Naive thymus-derived CD4-positive, alpha-beta T cell (primary cell): ENCODE measurements at regions of chr2 and their contacts with region 1.

Region 1: DNA sequence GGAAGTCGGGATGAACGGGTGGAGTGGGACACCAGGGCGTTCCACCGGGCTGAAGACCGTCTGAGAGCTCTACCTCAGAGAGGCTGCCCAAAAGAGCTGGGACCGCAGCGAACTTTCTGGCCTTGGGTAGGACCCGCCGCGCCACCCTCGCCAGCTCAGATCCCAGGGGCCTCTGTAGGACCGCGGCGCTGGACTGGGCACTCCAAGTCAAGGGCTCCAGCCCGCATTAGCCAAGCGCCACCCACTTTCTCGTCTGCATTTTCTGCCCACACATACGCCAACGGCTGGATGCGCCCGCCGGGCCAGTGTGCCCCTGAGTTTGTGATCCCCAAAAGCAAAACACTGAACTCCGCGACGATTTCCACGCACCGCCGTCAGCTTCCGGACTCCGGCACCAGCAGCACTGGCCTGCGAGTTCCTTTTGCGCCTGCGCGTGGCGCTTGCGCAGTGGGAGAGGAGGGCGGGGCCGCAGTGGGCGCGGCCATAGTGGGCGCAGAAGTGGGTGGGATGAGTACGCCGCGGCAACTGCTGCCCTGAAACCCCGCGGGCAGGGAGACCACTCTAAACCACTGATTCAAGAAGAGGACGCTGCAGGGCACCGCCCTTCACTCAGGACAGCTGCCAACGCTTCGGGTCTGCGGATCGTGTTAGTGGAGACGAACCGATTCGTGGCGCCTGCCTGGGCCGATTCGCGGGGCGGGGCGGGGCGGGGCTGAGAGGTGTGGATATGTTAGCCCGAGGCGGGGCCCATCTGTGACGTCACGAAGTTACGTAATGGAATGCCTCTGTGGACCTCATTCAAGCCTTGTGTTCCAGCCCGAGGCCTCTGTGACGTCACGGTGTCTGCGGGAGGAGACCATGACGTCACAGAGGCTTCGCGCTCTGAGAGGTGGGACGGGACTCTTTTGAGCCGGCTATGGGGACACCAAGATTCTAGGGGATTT is 10.5 kb downstream of the OSR1 start:
- DNase-seq: peak; percentile 97 to 100 (median 99)
- ATAC-seq: peak; percentile 94
- H3K4me3 ChIP-seq: peak overlapping the region; percentile 85
- H3K4me3 Mint-ChIP-seq: peak overlapping the region; percentile 90 to 99 (median 96)
- H3K27ac ChIP-seq: peak overlapping the region; percentile 90
- H3K27ac Mint-ChIP-seq: peak overlapping the region; percentile 92 to 100 (median 98)
- H3K4me1 ChIP-seq: peaks cover 11 to 22% of the 10 kb centered on the region in 2 donors
- H3K4me1 Mint-ChIP-seq: peaks cover 19 to 45% (median 34%) of the 10 kb centered on the region in 7 donors
- H3K27me3 ChIP-seq: peaks cover 7 to 25% of the 10 kb centered on the region in 2 donors
- H3K27me3 Mint-ChIP-seq: peaks cover 29 to 41% (median 33%) of the 10 kb centered on the region in 5 donors

Region 2: GRCh38 chr2:17753803-17754663 is 1593.9 kb before region 1 on chr2 and contains the starts of genes GEN1 and SMC6:
- CTCF ChIA-PET with region 1: no interaction called
- POLR2A ChIA-PET with region 1: no interaction called
- intact Hi-C with region 1: loop called (anchors 2 to 5 kb)
- DNase-seq: peak; percentile 84 to 98 (median 94)
- ATAC-seq: peak; percentile 91
- H3K4me3 ChIP-seq: peak within 1 kb of the TSS; percentile 89
- H3K4me3 Mint-ChIP-seq: peak within 1 kb of the TSS; percentile 82 to 94 (median 90)
- H3K27ac ChIP-seq: peak within 1 kb of the TSS; percentile 99
- H3K27ac Mint-ChIP-seq: peak within 1 kb of the TSS; percentile 84 to 98 (median 96)
- H3K4me1 ChIP-seq: peaks cover 0 to 10% of the 10 kb centered on the region in 2 donors
- H3K4me1 Mint-ChIP-seq: peaks cover 13 to 48% (median 29%) of the 10 kb centered on the region in 7 donors
- H3K27me3 ChIP-seq: no peaks in the 10 kb centered on the region
- H3K27me3 Mint-ChIP-seq: no peaks in the 10 kb centered on the region
- total RNA-seq, gene GEN1: 5.6 to 25.8 (median 8.0) TPM
- total RNA-seq, gene SMC6: 7.9 to 35.6 (median 14.6) TPM

Region 3: GRCh38 chr2:19266838-19267237 is 81.1 kb before region 1 on chr2:
- CTCF ChIA-PET with region 1: no interaction called
- POLR2A ChIA-PET with region 1: no interaction called
- intact Hi-C with region 1: no loop called
- DNase-seq: no peak
- ATAC-seq: no peak
- H3K4me3 ChIP-seq: no peak overlapping the region
- H3K4me3 Mint-ChIP-seq: no peak overlapping the region
- H3K27ac ChIP-seq: no peak overlapping the region
- H3K27ac Mint-ChIP-seq: no peak overlapping the region
- H3K4me1 ChIP-seq: no peaks in the 10 kb centered on the region
- H3K4me1 Mint-ChIP-seq: no peaks in the 10 kb centered on the region
- H3K27me3 ChIP-seq: no peaks in the 10 kb centered on the region
- H3K27me3 Mint-ChIP-seq: peaks cover 0 to 7% (median 0%) of the 10 kb centered on the region in 5 donors

Region 4: DNA sequence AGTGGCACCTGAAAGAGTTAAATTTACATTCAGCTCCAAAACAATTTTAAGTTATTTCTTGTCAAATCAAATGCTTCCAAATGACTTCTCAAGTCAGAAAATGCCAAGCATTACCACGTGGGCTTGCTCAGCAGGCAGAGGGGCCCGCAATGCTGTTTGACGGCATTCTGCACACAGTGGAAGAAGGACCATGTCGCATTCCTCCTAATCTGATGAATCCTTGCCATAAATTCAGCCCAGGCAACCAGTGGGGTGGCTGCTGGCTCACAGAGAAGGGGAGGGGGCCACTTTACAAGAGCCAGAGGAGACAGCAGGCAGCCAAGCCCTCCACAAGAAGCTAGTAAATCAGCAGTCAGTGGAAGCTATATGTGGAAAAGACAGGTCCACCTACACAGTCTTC is 46.2 kb before region 1 on chr2:
- CTCF ChIA-PET with region 1: no interaction called
- POLR2A ChIA-PET with region 1: no interaction called
- intact Hi-C with region 1: no loop called
- DNase-seq: no peak
- ATAC-seq: no peak
- H3K4me3 ChIP-seq: no peak overlapping the region
- H3K4me3 Mint-ChIP-seq: no peak overlapping the region
- H3K27ac ChIP-seq: no peak overlapping the region
- H3K27ac Mint-ChIP-seq: no peak overlapping the region
- H3K4me1 ChIP-seq: no peaks in the 10 kb centered on the region
- H3K4me1 Mint-ChIP-seq: no peaks in the 10 kb centered on the region
- H3K27me3 ChIP-seq: no peaks in the 10 kb centered on the region
- H3K27me3 Mint-ChIP-seq: no peaks in the 10 kb centered on the region

Region 5: GRCh38 chr2:19474128-19474527 is 126.2 kb after region 1 on chr2:
- CTCF ChIA-PET with region 1: no interaction called
- POLR2A ChIA-PET with region 1: no interaction called
- intact Hi-C with region 1: loop called (anchors 1 to 5 kb)
- DNase-seq: peak in 8 of 9 donors; percentile 30 to 84 (median 75)
- ATAC-seq: peak; percentile 95
- H3K4me3 ChIP-seq: no peak overlapping the region
- H3K4me3 Mint-ChIP-seq: peak overlapping the region; percentile 24 to 75 (median 56)
- H3K27ac ChIP-seq: no peak overlapping the region
- H3K27ac Mint-ChIP-seq: peak overlapping the region in 7 of 9 donors; percentile 14 to 84 (median 22)
- H3K4me1 ChIP-seq: peaks cover 8 to 19% of the 10 kb centered on the region in 2 donors
- H3K4me1 Mint-ChIP-seq: peaks cover 11 to 32% (median 25%) of the 10 kb centered on the region in 7 donors
- H3K27me3 ChIP-seq: no peaks in the 10 kb centered on the region
- H3K27me3 Mint-ChIP-seq: peaks cover 33 to 66% (median 43%) of the 10 kb centered on the region in 5 donors

Region 6: DNA sequence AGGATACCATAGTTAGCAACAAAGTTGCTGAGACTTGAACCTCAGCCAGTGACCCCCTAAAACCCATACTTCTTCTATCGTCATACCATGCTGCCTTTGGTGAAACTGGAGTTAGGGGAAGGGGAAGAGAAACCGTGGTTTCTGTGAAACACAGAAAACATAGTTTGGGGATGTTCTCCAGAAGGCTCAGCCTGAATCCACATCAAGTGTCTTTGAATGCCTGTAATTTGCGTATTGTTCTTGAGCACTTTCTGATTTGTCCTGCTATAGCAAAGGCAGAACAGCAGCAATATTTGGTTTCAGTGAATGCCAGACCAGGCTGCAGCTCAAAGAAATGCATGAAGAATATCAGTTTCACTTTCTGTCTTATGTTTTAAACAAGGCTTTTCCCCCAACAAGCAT is 295.2 kb after region 1 on chr2:
- CTCF ChIA-PET with region 1: no interaction called
- POLR2A ChIA-PET with region 1: no interaction called
- intact Hi-C with region 1: no loop called
- DNase-seq: no peak
- ATAC-seq: no peak
- H3K4me3 ChIP-seq: no peak overlapping the region
- H3K4me3 Mint-ChIP-seq: no peak overlapping the region
- H3K27ac ChIP-seq: no peak overlapping the region
- H3K27ac Mint-ChIP-seq: no peak overlapping the region
- H3K4me1 ChIP-seq: no peaks in the 10 kb centered on the region
- H3K4me1 Mint-ChIP-seq: peaks cover 0 to 3% (median 0%) of the 10 kb centered on the region in 7 donors
- H3K27me3 ChIP-seq: no peaks in the 10 kb centered on the region
- H3K27me3 Mint-ChIP-seq: peaks cover 3 to 19% (median 9%) of the 10 kb centered on the region in 5 donors

Region 7: DNA sequence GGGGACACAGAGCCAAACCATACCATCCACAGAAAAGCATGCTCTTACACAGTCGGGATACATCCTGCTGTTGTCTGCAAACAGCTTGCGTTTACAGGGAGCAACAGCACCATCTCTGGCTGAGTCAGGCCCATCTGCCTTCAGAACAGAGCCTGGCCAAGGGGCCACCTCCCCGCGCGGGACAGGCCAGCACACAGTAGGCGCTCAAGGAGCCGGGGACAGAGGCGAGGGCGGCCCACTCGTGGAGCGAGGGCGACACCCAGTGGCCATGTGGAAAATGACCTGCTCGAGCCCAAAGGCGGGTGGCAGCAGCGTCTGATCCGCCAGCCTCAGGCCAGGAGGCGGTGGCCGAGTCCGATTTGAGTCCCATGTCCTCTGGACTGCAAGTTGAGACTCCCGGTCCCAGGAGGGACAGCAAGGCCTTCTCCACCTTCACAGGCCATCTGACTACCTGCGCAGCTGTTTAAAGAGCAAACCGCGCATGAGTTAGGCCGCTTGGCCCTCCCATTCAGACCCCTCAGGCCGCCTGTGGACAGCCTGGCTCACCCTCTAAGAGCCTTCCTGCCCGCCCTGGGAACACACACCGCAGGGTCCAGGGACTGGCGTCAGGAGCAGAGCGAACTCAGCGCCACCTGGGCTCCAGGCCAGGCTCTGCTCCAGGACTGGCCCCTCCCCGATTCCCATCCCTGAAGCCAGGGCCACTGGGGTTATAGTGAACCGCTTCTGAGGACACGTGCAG is 515.6 kb after region 1 on chr2:
- CTCF ChIA-PET with region 1: no interaction called
- POLR2A ChIA-PET with region 1: interaction called, 6 read pairs
- intact Hi-C with region 1: loop called (anchors 1 to 2 kb)
- DNase-seq: peak; percentile 28 to 77 (median 66)
- ATAC-seq: peak; percentile 84
- H3K4me3 ChIP-seq: no peak overlapping the region
- H3K4me3 Mint-ChIP-seq: peak overlapping the region in 1 of 10 donors; percentile 34
- H3K27ac ChIP-seq: no peak overlapping the region
- H3K27ac Mint-ChIP-seq: no peak overlapping the region
- H3K4me1 ChIP-seq: peaks cover 10% of the 10 kb centered on the region in 2 donors
- H3K4me1 Mint-ChIP-seq: peaks cover 10 to 17% (median 16%) of the 10 kb centered on the region in 7 donors
- H3K27me3 ChIP-seq: no peaks in the 10 kb centered on the region
- H3K27me3 Mint-ChIP-seq: peaks cover 0 to 13% (median 2%) of the 10 kb centered on the region in 5 donors

Region 8: GRCh38 chr2:19989681-19990415 is 642.0 kb after region 1 on chr2 and contains the start of gene WDR35:
- CTCF ChIA-PET with region 1: no interaction called
- POLR2A ChIA-PET with region 1: no interaction called
- intact Hi-C with region 1: loop called (anchors 2 to 5 kb)
- DNase-seq: peak; percentile 78 to 99 (median 86)
- ATAC-seq: peak; percentile 95
- H3K4me3 ChIP-seq: peak within 1 kb of the TSS; percentile 91
- H3K4me3 Mint-ChIP-seq: peak within 1 kb of the TSS; percentile 88 to 94 (median 89)
- H3K27ac ChIP-seq: peak within 1 kb of the TSS; percentile 68
- H3K27ac Mint-ChIP-seq: peak within 1 kb of the TSS; percentile 86 to 94 (median 89)
- H3K4me1 ChIP-seq: peaks cover 0 to 14% of the 10 kb centered on the region in 2 donors
- H3K4me1 Mint-ChIP-seq: peaks cover 11 to 33% (median 23%) of the 10 kb centered on the region in 7 donors
- H3K27me3 ChIP-seq: peaks cover 0 to 4% of the 10 kb centered on the region in 2 donors
- H3K27me3 Mint-ChIP-seq: peaks cover 7 to 30% (median 12%) of the 10 kb centered on the region in 5 donors
- total RNA-seq, gene WDR35: 3.2 to 6.0 (median 3.7) TPM

Region 9: DNA sequence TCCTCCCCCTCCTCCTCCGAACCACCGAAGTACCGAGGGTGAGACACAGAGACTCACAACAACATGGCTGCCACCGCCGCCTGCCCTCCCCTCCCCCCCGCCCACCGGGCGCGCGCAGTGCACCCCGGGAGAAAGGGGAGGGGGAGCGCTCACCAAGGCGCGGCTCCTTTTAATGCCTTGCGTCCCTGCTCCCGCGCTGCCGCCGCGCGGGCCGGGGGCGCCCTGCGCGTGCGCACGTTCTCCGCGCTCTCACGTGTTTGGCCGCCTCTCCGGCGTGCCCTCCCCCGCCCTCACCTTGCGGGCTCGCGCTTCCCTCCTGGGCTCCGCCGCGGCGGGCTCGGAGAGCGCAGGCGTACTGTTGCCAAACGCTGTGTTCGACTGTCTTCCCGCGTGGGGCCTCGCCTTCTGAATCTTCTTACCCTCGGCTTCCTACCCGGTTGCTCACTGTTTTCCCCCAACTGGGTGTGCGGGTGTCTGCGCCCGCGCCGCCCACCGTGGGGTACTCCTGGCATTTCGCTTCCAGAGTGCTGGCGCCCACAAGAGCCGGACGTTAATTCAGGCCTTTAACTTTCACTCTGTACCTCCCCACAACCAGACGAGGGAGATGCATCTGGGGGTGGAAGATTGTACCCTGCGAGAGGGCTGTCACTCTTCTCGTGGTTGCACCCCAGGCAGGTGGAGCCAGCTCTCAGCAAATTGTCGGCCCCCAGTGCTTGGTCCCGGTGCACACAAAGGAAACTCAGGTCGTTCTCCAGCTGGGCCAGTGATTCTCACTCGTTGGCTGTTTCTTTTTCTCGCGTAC is 1003.1 kb after region 1 on chr2 and contains the start of gene PUM2:
- CTCF ChIA-PET with region 1: no interaction called
- POLR2A ChIA-PET with region 1: no interaction called
- intact Hi-C with region 1: loop called (anchors 1 to 10 kb)
- DNase-seq: peak; percentile 93 to 98 (median 97)
- ATAC-seq: peak; percentile 92
- H3K4me3 ChIP-seq: peak within 1 kb of the TSS; percentile 86
- H3K4me3 Mint-ChIP-seq: peak within 1 kb of the TSS in 3 of 10 donors; percentile 86 to 94 (median 93)
- H3K27ac ChIP-seq: peak within 1 kb of the TSS; percentile 94
- H3K27ac Mint-ChIP-seq: peak within 1 kb of the TSS in 6 of 9 donors; percentile 84 to 95 (median 88)
- H3K4me1 ChIP-seq: peaks cover 32 to 47% of the 10 kb centered on the region in 2 donors
- H3K4me1 Mint-ChIP-seq: peaks cover 28 to 45% (median 37%) of the 10 kb centered on the region in 7 donors
- H3K27me3 ChIP-seq: no peaks in the 10 kb centered on the region
- H3K27me3 Mint-ChIP-seq: no peaks in the 10 kb centered on the region
- total RNA-seq, gene PUM2: 105 to 178 (median 137) TPM

Region 10: DNA sequence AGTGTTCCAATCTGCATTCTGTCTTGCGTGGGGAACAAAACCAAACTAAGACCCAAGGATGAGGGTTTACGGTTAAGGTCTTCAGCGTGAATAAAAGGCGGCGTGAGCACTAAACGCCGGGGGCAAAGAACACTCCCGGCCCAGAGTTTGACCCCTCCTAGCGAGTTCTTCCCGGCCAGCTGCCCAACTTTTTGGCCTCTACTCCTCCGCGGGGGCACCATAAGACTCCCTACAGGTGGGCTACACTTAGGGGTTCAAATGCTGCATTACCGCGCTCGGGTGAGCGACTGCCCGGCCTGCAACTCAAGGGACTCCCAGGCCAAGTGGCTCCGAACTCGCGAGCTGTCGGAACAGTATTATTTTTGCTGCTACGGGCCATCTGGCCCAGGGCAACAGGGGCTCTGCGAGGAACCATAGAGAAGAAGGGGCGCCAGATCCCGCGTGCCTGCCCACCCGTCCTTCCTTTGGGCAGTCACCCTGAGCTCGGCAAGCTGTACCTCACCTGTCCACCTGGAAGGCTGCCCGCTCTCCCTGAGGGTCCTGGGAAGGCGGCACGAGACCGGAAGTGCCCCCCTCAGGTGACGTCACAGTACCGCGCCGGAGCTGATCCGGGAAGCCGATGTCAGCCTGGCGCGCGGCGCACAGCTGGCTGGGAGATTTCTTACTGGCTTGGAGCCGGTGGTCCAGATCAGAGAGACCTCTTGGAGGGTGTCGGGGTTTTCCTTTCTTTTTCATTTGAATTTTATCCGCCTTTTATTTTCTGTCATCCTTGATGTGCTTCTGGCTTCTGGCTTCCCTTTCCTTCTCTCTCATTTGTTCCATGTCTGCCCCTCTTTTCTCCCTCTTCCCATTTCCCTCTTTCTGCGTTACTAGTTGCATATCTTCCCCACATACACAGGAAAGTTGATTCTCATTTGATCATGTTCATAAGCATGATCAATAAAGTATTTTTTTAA is 1474.9 kb after region 1 on chr2 and contains the start of gene LDAH:
- CTCF ChIA-PET with region 1: no interaction called
- POLR2A ChIA-PET with region 1: no interaction called
- intact Hi-C with region 1: loop called (anchors 2 to 5 kb)
- DNase-seq: peak; percentile 71 to 84 (median 81)
- ATAC-seq: peak; percentile 91
- H3K4me3 ChIP-seq: peak within 1 kb of the TSS; percentile 98
- H3K4me3 Mint-ChIP-seq: peak within 1 kb of the TSS; percentile 93 to 99 (median 97)
- H3K27ac ChIP-seq: peak within 1 kb of the TSS; percentile 86
- H3K27ac Mint-ChIP-seq: peak within 1 kb of the TSS; percentile 95 to 99 (median 98)
- H3K4me1 ChIP-seq: no peaks in the 10 kb centered on the region
- H3K4me1 Mint-ChIP-seq: peaks cover 7 to 45% (median 25%) of the 10 kb centered on the region in 7 donors
- H3K27me3 ChIP-seq: no peaks in the 10 kb centered on the region
- H3K27me3 Mint-ChIP-seq: peaks cover 0 to 2% (median 0%) of the 10 kb centered on the region in 5 donors
- total RNA-seq, gene LDAH: 11.1 to 29.8 (median 18.4) TPM